Activated CD4-positive, alpha-beta T cell treated with anti-CD3 and anti-CD28 coated beads, Interleukin-2, amount 10 ng/mL, durations not matched to agents 24 days and 14 days (primary cell): ENCODE measurements at regions of chr6 and their contacts with region 1.

Region 1: GRCh38 chr6:37499433-37500293 is at the start of gene CCDC167:
- DNase-seq: peak; percentile 99
- H3K4me3 Mint-ChIP-seq: peak within 1 kb of the TSS; percentile 93
- H3K27ac Mint-ChIP-seq: peak within 1 kb of the TSS; percentile 94
- H3K4me1 Mint-ChIP-seq: peaks cover 70% of the 10 kb centered on the region
- H3K27me3 Mint-ChIP-seq: no peaks in the 10 kb centered on the region
- total RNA-seq, gene CCDC167: 59.1 and 62.4 TPM in 2 replicates

Region 2: DNA sequence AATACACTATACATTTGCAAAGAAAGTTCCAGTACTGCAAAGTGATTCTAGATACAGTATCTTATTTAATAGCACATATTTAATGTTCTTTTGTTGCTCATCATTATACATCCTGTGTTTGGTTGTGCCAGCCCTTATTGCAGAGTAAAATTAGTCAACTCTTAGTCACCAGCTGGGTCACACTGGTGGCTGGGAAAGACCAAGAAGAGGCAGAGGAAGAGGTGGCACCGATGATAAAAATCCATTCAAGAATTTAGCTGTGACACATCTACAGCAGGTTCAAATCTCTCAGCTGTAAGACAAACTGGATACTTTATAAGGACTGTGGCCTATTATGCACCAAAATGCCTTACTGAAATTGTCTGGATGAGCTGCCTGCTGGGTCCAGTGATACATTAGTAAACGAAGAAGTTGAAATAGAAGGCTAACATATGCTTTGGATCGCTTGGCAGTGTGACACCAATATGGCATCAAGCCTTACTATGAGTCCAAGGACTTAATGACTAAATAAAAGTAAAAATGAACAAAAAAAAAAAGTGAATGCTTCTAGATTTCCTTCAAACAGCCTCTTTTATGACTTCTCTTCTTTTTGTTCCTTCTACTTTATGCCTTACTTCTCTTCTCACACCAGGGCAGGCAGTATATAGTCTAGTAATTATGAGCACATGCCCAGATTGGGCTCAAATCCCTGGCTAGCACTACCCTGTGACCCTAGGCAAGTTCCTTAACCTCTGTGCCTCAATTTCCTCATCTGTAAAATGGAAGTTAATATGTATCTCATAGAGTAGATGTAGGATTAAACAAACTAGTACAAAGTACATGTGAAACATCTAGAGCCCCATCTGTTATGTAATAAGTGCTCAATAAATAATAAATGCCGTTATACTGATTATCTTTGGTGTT is 175.3 kb before region 1 on chr6:
- intact Hi-C with region 1: no loop called
- DNase-seq: no peak
- H3K4me3 Mint-ChIP-seq: no peak overlapping the region
- H3K27ac Mint-ChIP-seq: peak overlapping the region; percentile 8
- H3K4me1 Mint-ChIP-seq: peaks cover 17% of the 10 kb centered on the region
- H3K27me3 Mint-ChIP-seq: no peaks in the 10 kb centered on the region

Region 3: GRCh38 chr6:37516076-37516919 is 16.6 kb after region 1 on chr6:
- intact Hi-C with region 1: loop called (anchors 1 kb)
- DNase-seq: peak; percentile 94
- H3K4me3 Mint-ChIP-seq: peak overlapping the region; percentile 76
- H3K27ac Mint-ChIP-seq: peak overlapping the region; percentile 97
- H3K4me1 Mint-ChIP-seq: peaks cover 58% of the 10 kb centered on the region
- H3K27me3 Mint-ChIP-seq: no peaks in the 10 kb centered on the region

Region 4: DNA sequence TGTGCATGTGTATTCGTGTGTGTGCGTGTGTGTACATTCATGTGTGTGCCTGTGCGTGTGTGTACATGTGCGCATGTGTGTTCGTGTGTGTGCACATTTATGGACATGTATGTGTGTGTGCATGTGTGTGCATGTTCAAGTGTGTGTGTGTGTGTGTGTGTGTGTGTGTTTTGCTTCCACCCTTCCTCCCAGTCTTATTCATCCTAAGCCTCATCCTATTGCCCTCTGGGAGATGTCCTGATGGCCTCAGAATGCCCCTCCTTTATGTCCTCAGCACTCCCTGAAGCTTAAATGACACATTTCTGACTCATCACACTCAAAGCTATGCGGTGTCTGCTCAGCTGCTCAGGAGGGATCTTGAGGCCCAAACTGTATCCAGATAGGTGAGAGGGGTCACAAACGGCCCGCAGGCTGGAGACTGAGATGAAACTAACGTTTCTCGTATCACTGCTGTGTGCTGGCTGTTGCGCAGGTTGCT is 76.7 kb after region 1 on chr6:
- intact Hi-C with region 1: no loop called
- DNase-seq: no peak
- H3K4me3 Mint-ChIP-seq: no peak overlapping the region
- H3K27ac Mint-ChIP-seq: no peak overlapping the region
- H3K4me1 Mint-ChIP-seq: no peaks in the 10 kb centered on the region
- H3K27me3 Mint-ChIP-seq: peaks cover 2% of the 10 kb centered on the region

Region 5: GRCh38 chr6:37965964-37966676 is 466.5 kb after region 1 on chr6:
- intact Hi-C with region 1: no loop called
- DNase-seq: no peak
- H3K4me3 Mint-ChIP-seq: no peak overlapping the region
- H3K27ac Mint-ChIP-seq: no peak overlapping the region
- H3K4me1 Mint-ChIP-seq: peaks cover 8% of the 10 kb centered on the region
- H3K27me3 Mint-ChIP-seq: no peaks in the 10 kb centered on the region